A549 (cell line): ENCODE measurements at regions of chr6 and their contacts with region 1.

Region 1: GRCh38 chr6:63441266-63441956 is 121.6 kb upstream of the LGSN start:
- DNase-seq: peak; percentile 62 to 86
- ATAC-seq: peak; percentile 89 to 94
- H3K4me3 ChIP-seq: peak overlapping the region; percentile 71
- H3K27ac ChIP-seq: peak overlapping the region; percentile 78 to 97
- H3K4me1 ChIP-seq: peaks cover 8% of the 10 kb centered on the region; the same call in 2 of the 3 replicates
- CTCF ChIP-seq: peak; percentile 40
- EP300 ChIP-seq: no peak
- POLR2A ChIP-seq: no peak; the same call in 1 of the 2 replicates
- RAD21 ChIP-seq: peak; percentile 56 to 61

Region 2: GRCh38 chr6:63452124-63452523 is 10.7 kb after region 1 on chr6:
- CTCF ChIA-PET with region 1: no interaction called
- POLR2A ChIA-PET with region 1: interaction called, 20 read pairs
- DNase-seq: peak in 1 of 2 experiments; percentile 90
- ATAC-seq: peak; percentile 76 to 89; a peak in 5 of 6 replicates
- H3K4me3 ChIP-seq: no peak overlapping the region
- H3K27ac ChIP-seq: peak overlapping the region; percentile 74 to 83
- H3K4me1 ChIP-seq: peaks cover 52% of the 10 kb centered on the region
- CTCF ChIP-seq: no peak
- EP300 ChIP-seq: peak; percentile 63 to 83; a peak in 3 of 5 replicates
- POLR2A ChIP-seq: no peak
- RAD21 ChIP-seq: peak; percentile 5 to 52; a peak in 4 of 5 replicates

Region 3: DNA sequence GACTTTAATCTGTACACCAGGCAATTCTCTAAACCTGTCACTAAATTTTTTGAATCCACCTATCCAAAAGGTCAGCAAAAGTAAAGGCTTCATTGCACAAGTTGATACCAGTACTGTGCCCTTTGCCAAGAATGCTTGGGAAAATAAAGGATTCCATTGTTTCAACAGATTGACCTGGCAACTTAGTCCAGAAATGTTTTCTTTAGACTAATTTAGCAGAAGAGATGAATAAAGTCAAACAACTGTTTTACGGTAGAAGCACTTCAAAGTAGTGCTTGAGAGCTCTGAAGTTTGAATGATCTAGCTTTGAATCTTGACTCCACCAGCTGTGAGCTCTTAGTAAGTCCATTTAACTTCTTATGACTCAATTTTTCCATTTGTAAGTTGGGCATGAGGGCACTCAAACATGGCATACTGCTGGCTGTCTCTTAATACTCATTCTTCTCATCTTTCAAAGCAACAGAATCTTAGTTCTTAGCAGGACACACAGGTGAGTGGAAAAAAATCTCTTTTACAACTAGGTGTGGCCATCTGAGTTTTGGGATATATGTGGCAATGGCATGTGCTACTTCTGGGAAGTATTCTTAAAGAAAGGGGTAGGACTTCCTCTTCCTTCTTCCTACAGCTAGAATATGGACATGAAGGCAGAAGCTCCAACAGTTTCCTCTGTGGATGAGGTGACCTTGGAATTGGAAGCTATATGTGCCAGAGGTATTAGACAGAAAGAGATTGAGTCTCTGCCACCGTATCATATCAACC is 75.0 kb after region 1 on chr6:
- CTCF ChIA-PET with region 1: interaction called, 6 read pairs
- POLR2A ChIA-PET with region 1: interaction called, 12 read pairs
- DNase-seq: peak in 1 of 2 experiments; percentile 86
- ATAC-seq: peak; percentile 65 to 66
- H3K4me3 ChIP-seq: no peak overlapping the region
- H3K27ac ChIP-seq: peak overlapping the region; percentile 81 to 90
- H3K4me1 ChIP-seq: peaks cover 73% of the 10 kb centered on the region
- CTCF ChIP-seq: no peak
- EP300 ChIP-seq: peak; percentile 78 to 91; a peak in 4 of 5 replicates
- POLR2A ChIP-seq: no peak
- RAD21 ChIP-seq: peak; percentile 13 to 40; a peak in 3 of 5 replicates

Region 4: GRCh38 chr6:63521475-63522210 is 80.2 kb after region 1 on chr6:
- CTCF ChIA-PET with region 1: interaction called, 7 read pairs
- POLR2A ChIA-PET with region 1: interaction called, 13 read pairs
- DNase-seq: peak in 1 of 2 experiments; percentile 52
- ATAC-seq: peak; percentile 59 to 61; a peak in 4 of 6 replicates
- H3K4me3 ChIP-seq: no peak overlapping the region
- H3K27ac ChIP-seq: peak overlapping the region; percentile 88 to 97
- H3K4me1 ChIP-seq: peaks cover 72% of the 10 kb centered on the region
- CTCF ChIP-seq: no peak
- EP300 ChIP-seq: no peak
- POLR2A ChIP-seq: no peak
- RAD21 ChIP-seq: no peak

Region 5: GRCh38 chr6:63527658-63528514 is 86.5 kb after region 1 on chr6:
- CTCF ChIA-PET with region 1: interaction called, 7 read pairs
- POLR2A ChIA-PET with region 1: interaction called, 32 read pairs
- DNase-seq: peak; percentile 79 to 97
- ATAC-seq: peak; percentile 92 to 99
- H3K4me3 ChIP-seq: peak overlapping the region; percentile 32
- H3K27ac ChIP-seq: peak overlapping the region; percentile 97 to 99
- H3K4me1 ChIP-seq: peaks cover 65% of the 10 kb centered on the region
- CTCF ChIP-seq: no peak
- EP300 ChIP-seq: peak; percentile 97 to 98; a peak in 4 of 5 replicates
- POLR2A ChIP-seq: no peak
- RAD21 ChIP-seq: peak; percentile 6 to 65; a peak in 3 of 5 replicates

Region 6: GRCh38 chr6:63573140-63573898 is 131.9 kb after region 1 on chr6:
- CTCF ChIA-PET with region 1: interaction called, 4 read pairs
- POLR2A ChIA-PET with region 1: interaction called, 22 read pairs
- DNase-seq: peak in 1 of 2 experiments; percentile 79
- ATAC-seq: peak; percentile 36 to 39
- H3K4me3 ChIP-seq: peak overlapping the region; percentile 54
- H3K27ac ChIP-seq: peak overlapping the region; percentile 97 to 100
- H3K4me1 ChIP-seq: peaks cover 43% of the 10 kb centered on the region
- CTCF ChIP-seq: no peak
- EP300 ChIP-seq: no peak
- POLR2A ChIP-seq: peak; percentile 42
- RAD21 ChIP-seq: 0 out of 5 replicates have a peak, but pooled peaks of 1 of the 2 experiments have one; percentile 1

Region 7: DNA sequence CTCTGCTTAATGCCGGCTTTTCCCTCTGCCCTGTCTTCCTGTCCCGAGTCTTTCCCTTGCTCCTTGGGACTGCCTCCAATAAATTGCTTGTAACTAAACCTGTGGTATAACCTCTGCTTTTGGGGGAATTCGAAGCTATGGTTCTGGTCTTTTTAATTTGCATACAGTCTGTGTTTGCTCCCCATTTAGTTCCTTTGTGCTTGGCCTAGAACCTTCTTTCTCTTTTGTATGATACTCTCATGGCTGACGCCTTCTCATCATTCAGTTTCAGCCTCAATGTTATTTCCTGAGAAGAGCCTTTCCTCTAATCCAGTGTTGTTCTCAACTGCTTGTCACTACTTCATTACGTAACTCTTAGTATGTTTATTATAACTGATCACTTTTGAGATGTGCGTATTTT is 442.2 kb after region 1 on chr6:
- CTCF ChIA-PET with region 1: no interaction called
- POLR2A ChIA-PET with region 1: no interaction called
- DNase-seq: no peak
- ATAC-seq: no peak
- H3K4me3 ChIP-seq: no peak overlapping the region
- H3K27ac ChIP-seq: no peak overlapping the region
- H3K4me1 ChIP-seq: no peaks in the 10 kb centered on the region
- CTCF ChIP-seq: no peak
- EP300 ChIP-seq: no peak
- POLR2A ChIP-seq: no peak
- RAD21 ChIP-seq: no peak